HCT116 (cell line): ENCODE measurements at regions of chr12 and their contacts with region 1.

Region 1: DNA sequence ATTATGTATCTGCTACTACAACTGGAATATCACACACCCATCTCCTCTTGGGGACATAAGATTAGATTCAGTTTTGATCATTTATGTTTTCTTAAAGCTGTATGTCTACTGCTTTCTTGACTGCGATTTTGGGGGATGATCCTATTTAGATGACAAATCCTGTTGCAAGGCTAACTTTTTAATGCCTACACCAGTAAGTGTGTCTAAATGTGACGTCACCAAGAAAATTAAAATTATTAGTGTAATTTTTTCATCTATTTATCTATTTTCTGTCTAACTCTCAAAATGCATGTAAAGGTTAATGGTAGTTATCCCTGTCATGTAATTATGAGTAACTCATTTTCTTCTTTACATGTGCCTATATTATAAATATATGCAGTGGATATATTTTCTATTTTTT is 170.9 kb upstream of the PPFIA2 start:
- DNase-seq: no peak
- ATAC-seq: no peak
- H3K4me3 ChIP-seq: no peak overlapping the region
- H3K27ac ChIP-seq: no peak overlapping the region
- H3K4me1 ChIP-seq: no peaks in the 10 kb centered on the region
- H3K27me3 ChIP-seq: no peaks in the 10 kb centered on the region
- CTCF ChIP-seq: no peak
- POLR2A ChIP-seq: no peak
- RAD21 ChIP-seq: no peak

Region 2: DNA sequence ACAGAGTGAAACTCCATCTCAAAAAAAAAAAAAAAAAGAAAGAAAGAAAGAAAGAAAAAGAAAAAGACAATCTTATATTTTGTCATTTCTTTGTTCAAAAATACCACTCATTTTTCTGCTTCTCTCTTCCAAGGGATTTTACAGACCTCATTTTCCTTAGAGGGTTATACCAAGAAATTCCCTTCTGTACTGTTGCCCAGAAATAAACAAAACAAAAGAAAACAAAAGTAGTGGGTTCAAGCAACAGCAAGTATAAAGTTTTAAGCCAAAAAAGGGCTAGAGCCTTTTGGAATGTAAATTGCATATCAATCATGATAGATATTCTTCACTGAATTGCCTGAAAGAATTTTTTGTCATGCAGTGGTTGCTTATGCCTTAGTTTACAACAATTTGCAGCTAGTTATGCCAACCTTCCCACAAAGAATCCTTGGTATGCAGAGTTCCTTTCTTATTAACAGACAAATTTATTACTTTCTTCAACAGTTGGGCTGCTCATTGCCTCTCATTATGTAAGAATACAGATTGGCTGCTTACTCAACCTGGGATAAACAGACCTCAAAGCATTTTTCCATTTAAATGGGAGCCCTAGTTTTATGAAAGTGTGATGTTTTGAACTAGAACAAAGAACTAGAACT is 41.8 kb before region 1 on chr12:
- CTCF ChIA-PET with region 1: no interaction called
- POLR2A ChIA-PET with region 1: no interaction called
- RAD21 ChIA-PET with region 1: no interaction called
- intact Hi-C with region 1: no loop called
- DNase-seq: no peak
- ATAC-seq: no peak
- H3K4me3 ChIP-seq: no peak overlapping the region
- H3K27ac ChIP-seq: no peak overlapping the region
- H3K4me1 ChIP-seq: no peaks in the 10 kb centered on the region
- H3K27me3 ChIP-seq: no peaks in the 10 kb centered on the region
- CTCF ChIP-seq: no peak
- POLR2A ChIP-seq: no peak
- RAD21 ChIP-seq: no peak

Region 3: GRCh38 chr12:81949841-81950308 is 19.8 kb after region 1 on chr12:
- CTCF ChIA-PET with region 1: no interaction called
- POLR2A ChIA-PET with region 1: no interaction called
- RAD21 ChIA-PET with region 1: no interaction called
- intact Hi-C with region 1: loop called (anchors 2 kb)
- DNase-seq: no peak
- ATAC-seq: no peak
- H3K4me3 ChIP-seq: no peak overlapping the region
- H3K27ac ChIP-seq: no peak overlapping the region
- H3K4me1 ChIP-seq: no peaks in the 10 kb centered on the region
- H3K27me3 ChIP-seq: no peaks in the 10 kb centered on the region
- CTCF ChIP-seq: no peak
- POLR2A ChIP-seq: no peak
- RAD21 ChIP-seq: no peak

Region 4: DNA sequence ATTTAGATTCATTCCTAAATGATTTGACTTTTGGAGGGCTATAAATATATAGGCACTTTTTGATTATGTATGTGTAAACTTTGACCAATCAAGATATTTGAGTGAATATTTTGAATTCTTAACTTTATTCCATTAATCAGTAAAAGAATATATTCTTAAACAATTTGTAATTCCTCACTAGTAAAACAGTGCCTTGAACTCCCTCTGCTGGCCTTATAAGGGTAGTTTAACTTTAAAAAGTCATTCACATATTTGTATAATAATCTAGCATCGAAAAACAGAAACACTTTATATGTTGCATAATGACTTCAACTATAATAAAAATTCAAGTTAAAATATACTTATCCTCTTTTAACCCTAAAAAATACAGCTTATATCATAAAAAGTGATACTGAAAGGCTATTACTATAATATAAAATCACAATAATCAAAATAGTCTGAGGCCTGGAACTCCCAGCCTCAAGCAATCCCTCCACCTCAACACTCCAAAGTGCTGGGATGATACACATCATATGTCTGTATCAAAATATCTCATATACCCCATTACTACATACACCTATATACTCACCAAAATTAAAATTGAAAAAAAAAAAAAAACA is 397.0 kb after region 1 on chr12:
- CTCF ChIA-PET with region 1: no interaction called
- POLR2A ChIA-PET with region 1: no interaction called
- RAD21 ChIA-PET with region 1: no interaction called
- intact Hi-C with region 1: no loop called
- DNase-seq: peak; percentile 19
- ATAC-seq: no peak
- H3K4me3 ChIP-seq: no peak overlapping the region
- H3K27ac ChIP-seq: no peak overlapping the region
- H3K4me1 ChIP-seq: no peaks in the 10 kb centered on the region
- H3K27me3 ChIP-seq: no peaks in the 10 kb centered on the region
- CTCF ChIP-seq: peak; percentile 49 to 55 (median 53); a peak in 4 of 6 replicates
- POLR2A ChIP-seq: no peak
- RAD21 ChIP-seq: peak; percentile 74